ENCODE measurements at regions of chr6 and their contacts with region 1.

Region 1: DNA sequence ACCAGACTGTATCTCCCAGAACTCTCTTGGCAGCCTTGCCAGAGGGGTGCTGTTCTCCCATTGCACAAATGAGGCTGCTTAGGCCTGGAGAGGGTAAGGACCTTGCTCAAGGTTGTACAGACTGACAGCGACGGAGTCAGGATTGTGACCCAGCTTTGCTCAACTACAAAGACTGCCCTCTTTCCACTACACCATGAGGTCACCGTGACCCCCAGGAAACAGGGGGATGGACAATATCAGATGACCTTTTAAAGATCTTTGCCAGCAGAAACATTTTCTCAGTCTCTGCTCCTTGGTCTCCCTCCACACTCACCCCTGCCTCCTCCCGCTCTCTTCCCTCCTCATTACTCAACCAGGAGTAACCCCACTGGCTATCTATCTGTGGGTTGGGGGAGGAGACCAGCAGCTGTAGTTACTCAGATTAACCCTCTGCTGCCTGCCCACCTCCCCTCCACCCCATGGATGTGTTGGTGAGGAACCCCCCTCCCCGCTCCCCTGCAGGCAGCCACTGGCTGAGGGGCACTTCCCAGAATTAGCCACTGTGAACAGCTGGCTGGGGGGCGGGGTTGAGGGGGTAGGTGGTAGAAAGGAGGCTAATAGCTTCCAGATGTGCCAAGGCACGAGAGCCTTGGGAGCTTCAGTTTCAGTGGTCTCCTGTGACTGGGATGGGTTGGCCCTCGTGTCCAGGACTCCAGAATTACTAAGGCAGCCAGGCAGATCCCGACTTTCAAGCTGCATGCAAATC is 26.9 kb upstream of the MRPS18A start:
- DNase-seq: no peak
- H3K4me3 ChIP-seq: no peak overlapping the region
- H3K27ac ChIP-seq: no peak overlapping the region
- H3K4me1 ChIP-seq: peaks cover 0 to 24% of the 10 kb centered on the region in 2 donors
- H3K27me3 ChIP-seq: no peaks in the 10 kb centered on the region
- CTCF ChIP-seq: no peak
- POLR2A ChIP-seq: no peak

Region 2: DNA sequence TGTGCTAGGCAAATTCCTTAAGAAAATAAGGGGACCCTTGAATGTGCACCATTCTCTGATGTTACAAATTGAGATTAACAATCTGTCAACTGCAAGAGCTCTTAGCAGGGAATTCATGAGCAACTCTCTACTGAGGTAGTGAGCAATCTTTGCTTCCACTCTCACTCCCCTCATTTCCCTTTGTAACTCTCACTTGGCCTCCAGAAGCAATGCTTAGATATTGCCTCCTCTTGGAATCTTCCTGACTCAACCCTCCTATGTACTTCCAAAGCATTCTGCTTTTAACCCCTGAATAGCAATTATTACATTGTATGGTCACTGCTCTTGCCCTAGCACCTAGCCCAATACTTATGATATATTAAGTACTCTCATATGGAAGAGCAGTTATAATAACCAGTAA is 155.2 kb before region 1 on chr6:
- intact Hi-C with region 1: no loop called
- DNase-seq: no peak
- H3K4me3 ChIP-seq: no peak overlapping the region
- H3K27ac ChIP-seq: no peak overlapping the region
- H3K4me1 ChIP-seq: no peaks in the 10 kb centered on the region
- H3K27me3 ChIP-seq: no peaks in the 10 kb centered on the region
- CTCF ChIP-seq: no peak
- POLR2A ChIP-seq: no peak

Region 3: GRCh38 chr6:43758617-43759050 is 44.2 kb after region 1 on chr6:
- intact Hi-C with region 1: loop called (anchors 5 kb)
- DNase-seq: peak in 1 of 2 donors; percentile 8
- H3K4me3 ChIP-seq: no peak overlapping the region
- H3K27ac ChIP-seq: no peak overlapping the region
- H3K4me1 ChIP-seq: peaks cover 4 to 13% of the 10 kb centered on the region in 2 donors
- H3K27me3 ChIP-seq: no peaks in the 10 kb centered on the region
- CTCF ChIP-seq: peak in 5 of 6 experiments; percentile 32 to 60 (median 40)
- POLR2A ChIP-seq: no peak

Region 4: GRCh38 chr6:43779852-43780236 is 65.4 kb after region 1 on chr6:
- intact Hi-C with region 1: no loop called
- DNase-seq: peak; percentile 89 to 91
- H3K4me3 ChIP-seq: no peak overlapping the region
- H3K27ac ChIP-seq: peak overlapping the region; percentile 51 to 93 (median 82)
- H3K4me1 ChIP-seq: peaks cover 42 to 70% of the 10 kb centered on the region in 2 donors
- H3K27me3 ChIP-seq: no peaks in the 10 kb centered on the region
- CTCF ChIP-seq: no peak
- POLR2A ChIP-seq: peak in 1 of 2 donors; percentile 22

Region 5: GRCh38 chr6:44074439-44075136 is 360.1 kb after region 1 on chr6:
- intact Hi-C with region 1: loop called (anchors 2 kb)
- DNase-seq: peak; percentile 70 to 74
- H3K4me3 ChIP-seq: no peak overlapping the region
- H3K27ac ChIP-seq: peak overlapping the region; percentile 1 to 29 (median 22)
- H3K4me1 ChIP-seq: peaks cover 11 to 42% of the 10 kb centered on the region in 2 donors
- H3K27me3 ChIP-seq: no peaks in the 10 kb centered on the region
- CTCF ChIP-seq: peak; percentile 74 to 98 (median 86)
- POLR2A ChIP-seq: no peak

Measured in thyroid gland (tissue), 4 donors.